CD4-positive, alpha-beta memory T cell (primary cell): ENCODE measurements at regions of chr19 and their contacts with region 1.

Region 1: GRCh38 chr19:2084993-2085720 is 11.0 kb downstream of the MOB3A start:
- DNase-seq: peak; percentile 96 to 97 (median 97)
- H3K4me3 ChIP-seq: peak overlapping the region; percentile 80 to 97
- H3K4me3 Mint-ChIP-seq: peak overlapping the region; percentile 97 to 100 (median 99)
- H3K27ac ChIP-seq: peak overlapping the region; percentile 93
- H3K27ac Mint-ChIP-seq: peak overlapping the region; percentile 97 to 100 (median 99)
- H3K4me1 ChIP-seq: peaks cover 75% of the 10 kb centered on the region
- H3K4me1 Mint-ChIP-seq: peaks cover 45 to 85% (median 66%) of the 10 kb centered on the region in 4 donors
- H3K27me3 ChIP-seq: no peaks in the 10 kb centered on the region
- H3K27me3 Mint-ChIP-seq: peaks cover 0 to 2% of the 10 kb centered on the region in 2 donors

Region 2: DNA sequence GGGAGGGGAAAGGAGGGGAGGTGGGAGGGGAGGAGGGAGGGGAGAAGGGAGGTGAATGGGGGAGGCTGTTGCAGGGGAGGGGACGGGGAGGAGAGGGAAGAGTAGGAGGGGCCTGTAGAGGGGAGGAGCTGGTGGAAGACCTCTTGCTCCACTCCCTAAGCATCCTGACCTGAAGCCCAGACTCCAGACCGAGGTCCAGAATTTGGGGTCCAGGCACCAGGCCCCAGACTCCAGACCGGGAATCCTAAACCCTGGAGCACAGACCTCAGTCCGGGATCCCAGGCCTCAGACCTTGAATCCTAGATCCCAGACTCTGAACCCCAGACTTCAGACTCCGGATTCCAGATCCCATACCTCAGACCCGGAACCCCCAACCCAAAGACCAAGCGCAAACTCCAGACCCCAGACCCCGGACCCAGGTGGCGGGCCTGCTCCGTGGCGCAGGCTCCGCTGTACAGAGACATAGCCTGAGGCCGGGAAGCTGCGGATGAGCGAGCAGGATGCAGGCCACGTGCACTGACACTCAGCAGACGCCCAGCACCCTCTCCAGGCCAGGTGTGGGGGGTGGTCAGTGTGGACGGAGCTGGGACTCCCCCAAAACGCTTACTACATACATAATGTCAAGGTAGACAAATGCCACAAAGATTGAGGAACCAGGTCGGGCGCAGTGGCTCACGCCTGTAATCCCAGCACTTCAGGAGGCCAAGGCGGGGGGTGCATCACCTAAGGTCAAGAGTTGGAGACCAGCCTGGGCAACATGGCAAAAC is 68.9 kb before region 1 on chr19:
- CTCF ChIA-PET with region 1: interaction called, 8 read pairs
- POLR2A ChIA-PET with region 1: interaction called, 11 read pairs
- intact Hi-C with region 1: no loop called
- DNase-seq: peak; percentile 43 to 78 (median 55)
- H3K4me3 ChIP-seq: no peak overlapping the region
- H3K4me3 Mint-ChIP-seq: peak overlapping the region; percentile 43 to 65 (median 60)
- H3K27ac ChIP-seq: peak overlapping the region; percentile 18
- H3K27ac Mint-ChIP-seq: peak overlapping the region in 6 of 7 donors; percentile 36 to 91 (median 64)
- H3K4me1 ChIP-seq: peaks cover 16% of the 10 kb centered on the region
- H3K4me1 Mint-ChIP-seq: peaks cover 7 to 25% (median 16%) of the 10 kb centered on the region in 4 donors
- H3K27me3 ChIP-seq: no peaks in the 10 kb centered on the region
- H3K27me3 Mint-ChIP-seq: no peaks in the 10 kb centered on the region

Region 3: DNA sequence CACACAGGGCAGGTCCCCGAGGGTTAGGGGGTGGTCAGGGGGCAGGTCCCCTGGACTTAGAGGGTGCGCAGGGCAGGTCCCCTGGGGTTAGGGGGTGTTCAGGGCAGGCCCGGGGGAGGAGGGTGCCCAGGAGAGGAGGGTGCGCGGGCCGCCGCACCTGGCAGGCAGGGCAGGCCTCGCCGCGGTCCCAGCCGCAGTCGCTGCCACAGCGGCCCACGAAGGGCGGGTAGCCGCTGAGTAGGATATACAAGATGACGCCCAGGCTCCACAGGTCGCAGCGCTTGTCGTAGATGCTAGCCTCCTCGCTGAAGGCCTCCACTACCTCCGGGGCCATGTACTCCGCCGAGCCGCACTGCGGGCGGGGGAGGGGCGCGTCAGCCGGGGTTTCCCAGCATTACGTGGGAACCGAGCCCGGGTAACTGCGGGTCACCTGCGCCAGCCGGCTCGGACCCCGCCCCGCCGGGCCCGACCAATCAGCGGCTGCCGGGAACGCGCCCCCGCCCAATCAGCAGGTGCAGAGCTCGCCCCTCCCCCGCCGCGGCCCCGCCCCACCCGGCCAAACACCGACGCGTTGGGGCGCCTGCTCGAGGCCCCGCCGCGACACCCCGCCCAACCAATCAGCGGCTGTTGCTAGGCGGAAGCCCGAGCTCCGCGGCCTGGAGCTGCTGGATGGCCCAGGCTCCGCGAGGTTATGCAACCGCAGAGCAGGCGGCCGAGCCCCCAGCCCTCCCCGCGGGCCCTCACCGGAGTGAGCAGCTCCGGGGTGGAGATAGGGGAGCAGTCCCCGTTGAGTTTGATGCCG is 43.3 kb before region 1 on chr19:
- CTCF ChIA-PET with region 1: interaction called, 3 read pairs
- POLR2A ChIA-PET with region 1: interaction called, 35 read pairs
- intact Hi-C with region 1: loop called (anchors 2 kb)
- DNase-seq: peak; percentile 99 to 100 (median 99)
- H3K4me3 ChIP-seq: peak overlapping the region; percentile 36 to 57
- H3K4me3 Mint-ChIP-seq: peak overlapping the region; percentile 28 to 74 (median 60)
- H3K27ac ChIP-seq: peak overlapping the region; percentile 97
- H3K27ac Mint-ChIP-seq: peak overlapping the region; percentile 92 to 98 (median 96)
- H3K4me1 ChIP-seq: peaks cover 61% of the 10 kb centered on the region
- H3K4me1 Mint-ChIP-seq: peaks cover 9 to 51% (median 27%) of the 10 kb centered on the region in 4 donors
- H3K27me3 ChIP-seq: no peaks in the 10 kb centered on the region
- H3K27me3 Mint-ChIP-seq: no peaks in the 10 kb centered on the region

Region 4: DNA sequence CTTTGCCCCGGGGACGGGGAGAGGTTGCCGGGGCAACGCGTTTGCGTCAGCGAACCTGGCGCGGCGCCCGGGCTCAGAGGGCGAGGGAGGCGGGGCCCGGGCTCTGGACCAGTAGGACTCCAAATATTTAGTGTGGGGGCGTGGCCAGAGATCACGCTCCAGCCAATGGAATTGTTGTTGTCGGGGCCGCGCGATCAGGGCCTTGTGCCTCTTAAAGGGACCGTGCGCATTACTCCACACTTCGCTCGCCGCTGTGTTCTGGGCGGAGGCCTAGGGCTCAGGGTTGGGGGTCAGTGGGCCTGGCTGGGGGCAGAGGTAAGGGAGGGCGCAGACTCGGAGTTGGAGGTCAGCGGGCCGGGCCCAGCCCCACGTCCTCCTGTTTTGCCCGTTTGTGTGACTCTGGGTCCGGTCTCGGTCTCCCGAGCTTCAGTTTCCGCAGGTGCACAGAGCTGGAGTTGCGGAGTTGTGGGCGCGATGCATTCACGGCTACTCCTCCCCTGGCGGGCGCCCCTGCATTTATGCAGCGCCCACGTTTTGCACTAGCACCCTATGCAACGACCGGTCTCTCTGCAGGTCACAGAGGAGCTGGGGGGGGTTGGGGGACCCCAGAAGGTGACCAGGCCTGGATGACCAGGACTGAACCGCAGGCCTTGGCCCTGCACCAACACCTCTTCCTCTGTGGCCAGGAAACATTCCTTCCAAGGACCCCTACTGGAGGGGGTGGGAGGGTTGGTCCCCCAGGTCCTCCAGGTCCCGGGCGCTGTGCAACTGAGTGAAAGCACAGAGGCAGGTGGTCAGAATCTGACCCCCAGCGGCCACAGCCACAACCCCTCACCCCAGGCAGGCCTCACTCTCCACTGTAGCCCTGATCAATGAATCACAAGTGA is 23.4 kb before region 1 on chr19:
- CTCF ChIA-PET with region 1: interaction called, 5 read pairs
- POLR2A ChIA-PET with region 1: interaction called, 75 read pairs
- intact Hi-C with region 1: no loop called
- DNase-seq: peak; percentile 98 to 100 (median 100)
- H3K4me3 ChIP-seq: peak overlapping the region; percentile 87
- H3K4me3 Mint-ChIP-seq: peak overlapping the region; percentile 85 to 98 (median 92)
- H3K27ac ChIP-seq: peak overlapping the region; percentile 97
- H3K27ac Mint-ChIP-seq: peak overlapping the region; percentile 93 to 99 (median 97)
- H3K4me1 ChIP-seq: peaks cover 54% of the 10 kb centered on the region
- H3K4me1 Mint-ChIP-seq: peaks cover 12 to 53% (median 32%) of the 10 kb centered on the region in 4 donors
- H3K27me3 ChIP-seq: no peaks in the 10 kb centered on the region
- H3K27me3 Mint-ChIP-seq: no peaks in the 10 kb centered on the region

Region 5: GRCh38 chr19:2070436-2070827 is 14.7 kb before region 1 on chr19:
- CTCF ChIA-PET with region 1: interaction called, 35 read pairs
- POLR2A ChIA-PET with region 1: interaction called, 24 read pairs
- intact Hi-C with region 1: loop called (anchors 2 kb)
- DNase-seq: no peak
- H3K4me3 ChIP-seq: no peak overlapping the region
- H3K4me3 Mint-ChIP-seq: no peak overlapping the region
- H3K27ac ChIP-seq: no peak overlapping the region
- H3K27ac Mint-ChIP-seq: peak overlapping the region in 2 of 7 donors; percentile 29 to 80
- H3K4me1 ChIP-seq: peaks cover 21% of the 10 kb centered on the region
- H3K4me1 Mint-ChIP-seq: peaks cover 5 to 25% (median 13%) of the 10 kb centered on the region in 4 donors
- H3K27me3 ChIP-seq: no peaks in the 10 kb centered on the region
- H3K27me3 Mint-ChIP-seq: no peaks in the 10 kb centered on the region

Region 6: DNA sequence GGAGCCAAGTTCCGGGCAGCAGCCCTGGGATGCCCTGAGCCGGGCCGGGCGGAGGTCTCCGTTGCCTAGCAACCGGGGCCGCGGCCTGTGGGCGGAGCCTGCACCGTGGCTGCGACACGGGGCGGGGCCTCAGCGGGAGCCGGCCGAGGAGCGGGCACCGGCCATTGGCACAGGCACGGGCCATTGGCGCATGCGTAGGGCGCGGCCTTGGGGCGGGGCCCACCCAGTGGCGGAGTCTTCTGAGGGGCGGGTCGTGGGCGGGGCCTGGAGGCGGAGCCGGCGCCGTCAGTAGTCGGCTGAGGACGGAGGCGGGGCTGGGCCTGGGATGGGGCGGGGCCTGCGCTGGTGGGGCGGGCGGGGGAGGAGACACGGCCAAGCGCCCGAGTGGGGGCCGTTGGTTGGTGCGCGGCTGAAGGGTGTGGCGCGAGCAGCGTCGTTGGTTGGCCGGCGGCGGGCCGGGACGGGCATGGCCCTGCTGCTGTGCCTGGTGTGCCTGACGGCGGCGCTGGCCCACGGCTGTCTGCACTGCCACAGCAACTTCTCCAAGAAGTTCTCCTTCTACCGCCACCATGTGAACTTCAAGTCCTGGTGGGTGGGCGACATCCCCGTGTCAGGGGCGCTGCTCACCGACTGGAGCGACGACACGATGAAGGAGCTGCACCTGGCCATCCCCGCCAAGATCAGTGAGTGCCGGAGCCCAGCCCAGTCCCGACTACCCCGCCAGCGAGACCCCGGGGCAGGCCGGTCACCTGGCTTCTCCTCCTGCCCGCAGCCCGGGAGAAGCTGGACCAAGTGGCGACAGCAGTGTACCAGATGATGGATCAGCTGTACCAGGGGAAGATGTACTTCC is 11.5 kb after region 1 on chr19 and contains the start of gene IZUMO4:
- CTCF ChIA-PET with region 1: interaction called, 40 read pairs
- POLR2A ChIA-PET with region 1: interaction called, 323 read pairs
- intact Hi-C with region 1: loop called (anchors 1 kb)
- DNase-seq: peak; percentile 98 to 100 (median 99)
- H3K4me3 ChIP-seq: peak within 1 kb of the TSS; percentile 49 to 85
- H3K4me3 Mint-ChIP-seq: peak within 1 kb of the TSS; percentile 91 to 97 (median 96)
- H3K27ac ChIP-seq: peak within 1 kb of the TSS; percentile 81
- H3K27ac Mint-ChIP-seq: peak within 1 kb of the TSS; percentile 95 to 99 (median 96)
- H3K4me1 ChIP-seq: peaks cover 38% of the 10 kb centered on the region
- H3K4me1 Mint-ChIP-seq: peaks cover 12 to 44% (median 28%) of the 10 kb centered on the region in 4 donors
- H3K27me3 ChIP-seq: no peaks in the 10 kb centered on the region
- H3K27me3 Mint-ChIP-seq: no peaks in the 10 kb centered on the region
- total RNA-seq, gene IZUMO4: 18.6 to 22.1 TPM